Cardiac septum (tissue), 1 donor: ENCODE measurements at regions of chr13 and their contacts with region 1.

Region 1: GRCh38 chr13:20525690-20526544 is at the start of gene CRYL1:
- DNase-seq: peak; percentile 91
- total RNA-seq, gene CRYL1: 20.6 TPM

Region 2: GRCh38 chr13:20566898-20567874 is 41.3 kb after region 1 on chr13 and contains the start of gene IFT88:
- intact Hi-C with region 1: loop called (anchors 2 kb)
- DNase-seq: peak; percentile 95
- total RNA-seq, gene IFT88: 9.7 TPM

Region 3: GRCh38 chr13:20590561-20590960 is 64.6 kb after region 1 on chr13:
- intact Hi-C with region 1: no loop called
- DNase-seq: no peak

Region 4: DNA sequence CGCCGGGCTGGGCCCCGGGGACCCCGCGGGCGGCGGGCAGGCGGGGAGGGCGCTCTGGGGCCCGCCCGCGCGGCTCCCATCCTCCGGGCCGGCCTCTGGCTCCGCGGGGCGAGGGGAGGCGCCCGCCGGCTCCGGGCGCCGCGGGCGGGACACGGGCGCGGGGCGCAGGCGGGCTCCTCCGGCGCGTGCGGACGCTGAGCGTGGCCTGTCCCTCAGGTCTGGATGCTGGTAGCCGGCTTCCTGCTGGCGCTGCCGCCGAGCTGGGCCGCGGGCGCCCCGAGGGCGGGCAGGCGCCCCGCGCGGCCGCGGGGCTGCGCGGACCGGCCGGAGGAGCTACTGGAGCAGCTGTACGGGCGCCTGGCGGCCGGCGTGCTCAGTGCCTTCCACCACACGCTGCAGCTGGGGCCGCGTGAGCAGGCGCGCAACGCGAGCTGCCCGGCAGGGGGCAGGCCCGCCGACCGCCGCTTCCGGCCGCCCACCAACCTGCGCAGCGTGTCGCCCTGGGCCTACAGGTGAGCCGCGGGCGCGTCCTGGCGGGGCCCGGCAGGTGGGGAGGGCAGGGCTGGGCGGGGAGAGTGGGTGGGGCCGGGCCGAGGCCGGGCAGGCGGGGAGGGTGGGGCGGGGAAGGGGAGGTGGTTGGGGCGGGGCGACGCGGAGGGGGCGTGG is 178.0 kb after region 1 on chr13:
- intact Hi-C with region 1: loop called (anchors 5 kb)
- DNase-seq: no peak

Region 5: GRCh38 chr13:20814224-20814910 is 288.4 kb after region 1 on chr13:
- intact Hi-C with region 1: loop called (anchors 10 kb)
- DNase-seq: peak; percentile 89